ENCODE measurements at regions of chr6 and their contacts with region 1.

Region 1: GRCh38 chr6:37018198-37019064 is 13.0 kb downstream of the FGD2 start:
- DNase-seq: peak; percentile 95
- H3K4me3 Mint-ChIP-seq: no peak overlapping the region
- H3K27ac Mint-ChIP-seq: peak overlapping the region; percentile 85
- H3K4me1 Mint-ChIP-seq: peaks cover 54% of the 10 kb centered on the region
- H3K27me3 Mint-ChIP-seq: no peaks in the 10 kb centered on the region

Region 2: DNA sequence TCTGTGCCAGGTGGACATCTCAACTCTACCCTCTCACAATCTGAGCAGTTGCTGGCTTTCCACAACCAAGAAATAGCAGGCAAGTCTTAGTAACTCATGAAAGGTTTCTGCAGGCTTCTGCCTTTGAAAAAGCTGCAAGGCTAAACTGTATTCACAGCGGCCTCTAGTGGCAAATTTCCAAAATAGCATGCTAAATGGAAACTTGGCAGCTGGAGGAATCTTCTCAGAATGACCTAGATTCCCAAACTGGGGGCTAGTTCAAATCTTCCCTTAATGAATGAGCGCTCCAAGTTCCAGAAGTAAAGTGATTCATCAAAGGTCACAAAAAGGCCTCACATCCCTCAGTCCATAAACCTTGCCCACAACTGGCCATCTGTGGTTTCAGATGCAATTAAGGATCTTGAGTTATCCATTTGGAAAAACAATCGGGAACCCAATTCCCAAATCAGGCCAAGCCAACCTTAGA is 167.2 kb before region 1 on chr6:
- CTCF ChIA-PET with region 1: interaction called, 17 read pairs
- POLR2A ChIA-PET with region 1: no interaction called
- DNase-seq: peak; percentile 70
- H3K4me3 Mint-ChIP-seq: no peak overlapping the region
- H3K27ac Mint-ChIP-seq: no peak overlapping the region
- H3K4me1 Mint-ChIP-seq: peaks cover 4% of the 10 kb centered on the region
- H3K27me3 Mint-ChIP-seq: no peaks in the 10 kb centered on the region

Region 3: GRCh38 chr6:36904114-36904513 is 114.3 kb before region 1 on chr6:
- CTCF ChIA-PET with region 1: interaction called, 13 read pairs
- POLR2A ChIA-PET with region 1: no interaction called
- DNase-seq: no peak
- H3K4me3 Mint-ChIP-seq: no peak overlapping the region
- H3K27ac Mint-ChIP-seq: no peak overlapping the region
- H3K4me1 Mint-ChIP-seq: peaks cover 48% of the 10 kb centered on the region
- H3K27me3 Mint-ChIP-seq: no peaks in the 10 kb centered on the region

Region 4: DNA sequence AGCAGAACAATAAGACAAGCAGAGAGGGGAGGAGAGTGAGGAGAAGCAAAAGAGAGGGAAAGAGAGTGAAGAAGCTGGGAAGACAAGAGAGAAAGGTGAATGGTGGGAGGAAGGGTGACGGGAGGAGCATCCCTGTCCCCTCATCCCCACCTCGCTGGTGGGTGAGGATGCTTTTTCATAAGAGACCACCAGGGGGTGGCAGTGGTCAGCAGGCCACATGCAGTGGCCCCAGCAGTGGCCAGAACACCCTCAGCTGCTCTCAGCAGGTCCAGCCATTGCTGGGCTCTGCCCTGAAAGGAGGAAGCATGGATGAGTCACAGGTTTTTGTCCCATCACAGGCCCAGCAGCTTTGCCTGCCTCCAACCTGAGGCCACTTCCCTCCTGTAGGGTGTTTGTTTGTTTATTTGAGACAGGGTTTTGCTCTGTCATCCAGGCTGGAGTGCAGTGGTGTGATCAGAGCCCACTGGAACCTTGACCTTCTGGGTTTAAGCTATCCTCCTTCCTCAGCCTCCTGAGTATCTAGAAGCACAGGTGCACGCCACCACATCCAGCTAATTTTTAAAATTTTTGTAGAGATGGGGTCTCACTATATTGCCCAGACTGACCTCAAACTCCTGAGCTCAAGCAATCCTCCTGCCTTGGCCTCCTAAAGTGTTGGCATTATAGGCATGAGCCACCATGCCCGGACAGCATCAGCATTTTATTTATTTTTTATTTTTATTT is 11.0 kb after region 1 on chr6:
- CTCF ChIA-PET with region 1: interaction called, 439 read pairs
- POLR2A ChIA-PET with region 1: no interaction called
- DNase-seq: peak; percentile 44
- H3K4me3 Mint-ChIP-seq: no peak overlapping the region
- H3K27ac Mint-ChIP-seq: peak overlapping the region; percentile 79
- H3K4me1 Mint-ChIP-seq: peaks cover 74% of the 10 kb centered on the region
- H3K27me3 Mint-ChIP-seq: no peaks in the 10 kb centered on the region

Region 5: DNA sequence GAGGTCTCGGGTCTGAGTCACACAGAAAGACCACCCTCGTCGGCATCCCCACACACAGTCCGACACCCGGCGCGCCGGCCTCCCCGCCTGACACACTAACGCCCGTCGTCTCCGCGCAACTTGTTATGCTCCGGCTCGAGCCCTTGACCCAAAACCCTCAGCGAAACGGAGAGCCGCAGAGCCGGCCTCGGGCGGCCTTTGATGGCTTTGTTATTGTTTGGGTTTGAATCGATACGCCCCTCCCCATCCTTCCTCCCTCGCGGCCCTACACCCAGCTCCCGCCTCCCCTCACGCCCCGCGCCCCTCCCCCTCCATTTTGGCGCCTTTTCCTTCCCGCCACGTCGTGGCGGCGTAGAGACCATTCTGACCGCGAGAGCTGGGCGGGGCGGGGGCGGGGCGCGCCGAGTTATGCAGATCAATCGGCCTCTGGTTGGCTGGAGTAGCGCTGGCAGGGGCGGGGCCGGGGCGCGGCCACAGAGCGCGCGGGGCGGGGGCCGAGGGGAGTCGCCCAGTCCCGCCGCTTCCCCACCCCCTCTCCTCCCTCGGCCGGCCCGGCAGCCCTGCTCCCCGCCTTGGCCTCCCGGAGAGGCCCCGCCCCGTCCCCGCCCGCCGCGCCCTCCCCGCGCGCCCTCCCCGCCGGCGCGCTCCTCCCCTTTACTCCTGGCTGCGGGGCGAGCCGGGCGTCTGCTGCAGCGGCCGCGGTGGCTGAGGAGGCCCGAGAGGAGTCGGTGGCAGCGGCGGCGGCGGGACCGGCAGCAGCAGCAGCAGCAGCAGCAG is 151.3 kb after region 1 on chr6 and contains the start of gene PIM1:
- CTCF ChIA-PET with region 1: interaction called, 347 read pairs
- POLR2A ChIA-PET with region 1: interaction called, 4 read pairs
- DNase-seq: peak; percentile 99
- H3K4me3 Mint-ChIP-seq: peak within 1 kb of the TSS; percentile 99
- H3K27ac Mint-ChIP-seq: peak within 1 kb of the TSS; percentile 99
- H3K4me1 Mint-ChIP-seq: peaks cover 30% of the 10 kb centered on the region
- H3K27me3 Mint-ChIP-seq: peaks cover 6% of the 10 kb centered on the region
- total RNA-seq, gene PIM1: 393 to 412 TPM

Region 6: GRCh38 chr6:37200085-37200484 is 181.7 kb after region 1 on chr6:
- CTCF ChIA-PET with region 1: interaction called, 482 read pairs
- POLR2A ChIA-PET with region 1: no interaction called
- DNase-seq: no peak
- H3K4me3 Mint-ChIP-seq: no peak overlapping the region
- H3K27ac Mint-ChIP-seq: no peak overlapping the region
- H3K4me1 Mint-ChIP-seq: peaks cover 36% of the 10 kb centered on the region
- H3K27me3 Mint-ChIP-seq: no peaks in the 10 kb centered on the region

Region 7: DNA sequence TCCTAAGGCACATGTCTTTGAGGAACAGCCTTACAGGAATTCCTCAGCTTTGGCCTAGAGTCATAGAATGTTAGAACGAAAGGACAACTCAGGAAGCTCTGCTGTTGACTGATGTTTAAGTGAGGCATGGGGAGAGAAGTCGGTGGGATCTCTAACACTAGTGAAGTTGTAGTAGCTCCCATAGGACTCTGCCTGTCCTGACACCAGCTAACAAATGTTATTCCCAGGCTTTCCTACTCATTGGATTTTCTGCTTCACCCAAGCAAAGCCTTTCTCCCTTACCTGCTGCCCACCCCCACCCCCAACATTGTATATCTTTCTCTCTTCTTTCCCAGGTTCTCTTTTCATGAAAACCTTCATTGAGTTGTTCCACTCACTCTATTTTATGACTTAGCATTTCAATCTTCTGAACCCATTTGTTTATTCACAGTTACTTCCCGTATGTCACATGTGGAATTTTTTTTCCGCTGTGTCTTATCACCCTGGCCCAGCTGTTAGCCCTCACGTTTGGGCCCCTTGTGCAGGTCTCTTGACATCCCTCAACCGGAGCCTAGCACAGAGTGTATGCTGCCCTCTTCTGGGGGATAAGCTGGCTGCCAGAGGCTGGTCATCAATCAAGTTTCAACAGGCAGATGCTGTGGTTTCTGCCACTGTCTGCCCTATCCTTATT is 296.2 kb after region 1 on chr6:
- CTCF ChIA-PET with region 1: interaction called, 33 read pairs
- POLR2A ChIA-PET with region 1: no interaction called
- DNase-seq: peak; percentile 68
- H3K4me3 Mint-ChIP-seq: no peak overlapping the region
- H3K27ac Mint-ChIP-seq: peak overlapping the region; percentile 51
- H3K4me1 Mint-ChIP-seq: peaks cover 17% of the 10 kb centered on the region
- H3K27me3 Mint-ChIP-seq: no peaks in the 10 kb centered on the region

Region 8: GRCh38 chr6:37339741-37340638 is 321.6 kb after region 1 on chr6:
- CTCF ChIA-PET with region 1: no interaction called
- POLR2A ChIA-PET with region 1: no interaction called
- DNase-seq: no peak
- H3K4me3 Mint-ChIP-seq: no peak overlapping the region
- H3K27ac Mint-ChIP-seq: no peak overlapping the region
- H3K4me1 Mint-ChIP-seq: no peaks in the 10 kb centered on the region
- H3K27me3 Mint-ChIP-seq: peaks cover 15% of the 10 kb centered on the region

Measured in activated CD4-positive, alpha-beta T cell treated with anti-CD3 and anti-CD28 coated beads, Interleukin-2, amount 10 ng/mL, durations not matched to agents 7 days and 5 days (primary cell).